ENCODE measurements at regions of chr22 and their contacts with region 1.

Region 1: GRCh38 chr22:30386960-30387827 is at the start of gene RNF215:
- DNase-seq: peak; percentile 50 to 92 (median 79)
- H3K4me3 ChIP-seq: peak within 1 kb of the TSS; percentile 34 to 79 (median 66)
- H3K27ac ChIP-seq: peak within 1 kb of the TSS in 48 of 59 donors; percentile 6 to 86 (median 70)
- H3K27me3 ChIP-seq: no peaks in the 10 kb centered on the region
- CTCF ChIP-seq: peak; percentile 82 to 99 (median 94)
- total RNA-seq, gene RNF215: 18.9 to 55.4 (median 34.4) TPM

Region 2: DNA sequence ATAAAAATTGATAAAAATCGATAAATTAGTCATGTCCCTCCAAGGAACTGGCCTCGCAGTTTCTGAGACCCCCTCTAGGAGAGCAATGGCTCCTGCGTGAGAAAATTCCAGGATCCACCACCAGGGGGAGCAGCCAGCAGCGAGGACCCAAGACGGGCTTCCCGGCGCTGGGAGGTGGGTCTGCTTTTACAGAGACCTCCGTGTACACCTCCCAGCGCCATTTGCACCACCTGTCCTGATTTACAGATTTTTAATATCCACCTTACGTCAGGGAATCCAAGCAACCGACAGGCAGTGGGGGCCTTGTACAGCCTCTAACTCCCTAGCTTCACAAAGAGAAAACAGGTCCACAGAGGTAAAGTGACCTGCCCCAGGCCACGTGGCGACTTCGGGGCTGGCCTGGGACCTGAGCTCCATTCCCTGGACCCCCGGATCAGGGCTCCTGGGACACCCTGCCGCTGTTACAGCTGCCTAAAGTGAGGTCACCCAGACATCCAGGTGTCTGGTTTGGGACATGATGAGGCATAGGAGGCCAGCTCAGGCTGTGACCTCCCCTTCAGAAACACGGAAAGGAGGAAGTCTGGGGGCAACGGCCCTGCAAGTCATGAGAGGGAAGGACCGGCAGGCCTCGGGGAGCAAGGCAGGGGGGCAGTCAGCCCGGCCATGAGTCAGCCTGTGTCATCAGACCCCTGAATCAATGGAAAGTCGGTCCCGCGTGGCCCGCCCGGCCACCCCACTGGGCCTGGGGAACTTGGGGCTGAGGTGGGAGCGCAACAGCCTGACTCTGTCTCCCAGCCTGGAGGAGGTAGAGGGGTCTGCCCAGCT is 124.1 kb before region 1 on chr22:
- intact Hi-C with region 1: loop called in 1 of 2 experiments (anchors 2 kb)
- DNase-seq: peak; percentile 63 to 80 (median 76)
- H3K4me3 ChIP-seq: peak overlapping the region in 40 of 59 donors; percentile 2 to 49 (median 27)
- H3K27ac ChIP-seq: peak overlapping the region in 8 of 59 donors; percentile 19 to 71 (median 50)
- H3K27me3 ChIP-seq: no peaks in the 10 kb centered on the region
- CTCF ChIP-seq: peak; percentile 89 to 100 (median 98)

Region 3: GRCh38 chr22:30326706-30327362 is 60.4 kb before region 1 on chr22 and contains the start of gene TBC1D10A:
- intact Hi-C with region 1: loop called in 1 of 2 experiments (anchors 5 kb)
- DNase-seq: peak; percentile 63 to 92 (median 82)
- H3K4me3 ChIP-seq: peak within 1 kb of the TSS; percentile 54 to 98 (median 92)
- H3K27ac ChIP-seq: peak within 1 kb of the TSS in 57 of 59 donors; percentile 9 to 90 (median 78)
- H3K27me3 ChIP-seq: no peaks in the 10 kb centered on the region
- CTCF ChIP-seq: peak in 6 of 56 donors; percentile 10 to 24 (median 12)
- total RNA-seq, gene TBC1D10A: 8.7 to 34.6 (median 16.2) TPM

Region 4: DNA sequence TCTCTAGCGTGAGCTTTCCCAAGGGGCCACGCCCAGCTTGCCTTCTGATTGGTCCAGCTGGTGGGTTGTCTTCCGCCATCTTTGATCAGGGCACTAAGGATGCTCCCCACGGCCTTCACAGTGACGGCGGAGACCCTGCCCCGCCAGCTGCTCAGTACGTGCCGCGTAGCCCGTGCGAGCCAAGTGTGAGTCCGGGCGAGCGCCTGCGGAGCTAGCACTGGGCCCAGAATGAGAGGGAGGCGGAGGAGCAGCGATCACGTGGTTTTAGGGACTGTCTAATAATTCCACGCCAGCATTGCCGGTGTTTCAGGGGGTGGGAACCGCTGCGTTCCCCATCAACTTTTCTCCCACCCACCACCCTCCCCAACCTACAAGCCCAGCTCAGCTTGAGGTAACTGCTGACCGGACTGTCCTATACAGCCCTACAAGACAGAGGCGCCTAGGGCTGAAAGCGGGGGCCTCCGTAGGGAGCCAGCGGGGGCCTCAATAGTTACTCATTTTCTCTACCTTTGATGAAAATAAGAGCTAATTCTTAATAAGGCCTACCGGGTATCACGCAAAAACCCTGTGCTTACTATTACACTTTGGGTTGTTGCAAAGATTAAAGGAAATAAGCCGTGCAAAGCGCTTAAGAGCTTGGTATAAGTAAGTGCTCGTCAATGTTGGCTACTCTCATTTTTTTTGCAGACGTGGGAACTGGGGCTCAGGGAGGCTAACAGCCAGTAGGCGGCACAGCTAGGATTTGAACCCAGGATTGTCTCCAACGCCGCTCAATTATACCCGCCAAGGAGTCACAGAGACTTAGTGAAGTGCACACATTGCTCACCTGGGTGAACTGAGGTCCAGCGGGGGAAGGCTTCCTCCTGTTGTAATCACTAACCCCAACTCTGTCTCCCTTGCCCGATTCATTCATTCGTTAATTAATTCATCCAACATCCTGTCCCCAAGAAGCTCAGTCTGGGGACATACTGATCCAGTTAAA is 37.1 kb after region 1 on chr22:
- intact Hi-C with region 1: loop called in 1 of 2 experiments (anchors 2 kb)
- DNase-seq: peak; percentile 97 to 99 (median 98)
- H3K4me3 ChIP-seq: peak overlapping the region; percentile 32 to 91 (median 78)
- H3K27ac ChIP-seq: peak overlapping the region; percentile 87 to 100 (median 98)
- H3K27me3 ChIP-seq: no peaks in the 10 kb centered on the region
- CTCF ChIP-seq: peak in 26 of 56 donors; percentile 1 to 57 (median 18)

Region 5: DNA sequence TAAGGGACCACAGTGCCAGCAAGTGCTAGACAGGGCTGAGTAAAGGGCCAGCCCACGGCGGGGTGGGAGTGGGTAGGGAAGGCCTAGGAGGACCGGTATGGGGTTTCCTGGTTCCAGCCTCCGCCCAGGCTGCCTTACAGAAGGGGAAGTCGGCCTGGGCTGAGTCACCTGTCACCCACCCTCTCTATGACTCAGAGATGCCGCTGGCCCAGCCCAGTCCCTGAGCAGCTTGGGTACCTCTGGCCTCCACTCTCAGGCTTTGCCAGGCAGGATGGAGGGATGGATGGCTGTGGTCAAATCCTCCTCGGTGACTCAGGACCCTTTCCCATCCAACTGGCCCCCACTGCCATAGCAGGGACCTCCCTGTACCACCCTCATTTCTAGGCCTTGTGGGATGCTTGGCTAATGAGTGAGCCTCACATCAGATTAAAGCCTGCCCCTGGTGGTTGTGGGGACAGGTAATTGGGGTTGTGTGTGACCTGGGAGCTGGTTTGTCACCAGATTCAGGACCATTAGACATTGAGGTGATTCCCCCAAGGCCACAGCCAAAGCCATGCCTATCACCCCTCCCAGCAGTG is 262.3 kb after region 1 on chr22:
- intact Hi-C with region 1: no loop called
- DNase-seq: peak in 3 of 10 donors; percentile 45 to 82 (median 60)
- H3K4me3 ChIP-seq: no peak overlapping the region
- H3K27ac ChIP-seq: peak overlapping the region in 43 of 59 donors; percentile 10 to 92 (median 58)
- H3K27me3 ChIP-seq: no peaks in the 10 kb centered on the region
- CTCF ChIP-seq: no peak